ENCODE measurements at regions of chr1 and their contacts with region 1.

Region 1: GRCh38 chr1:71049951-71050598 is 2.5 kb upstream of the PTGER3 start:
- DNase-seq: no peak
- ATAC-seq: peak; percentile 50 to 78 (median 66)
- H3K4me3 ChIP-seq: no peak overlapping the region
- H3K27ac ChIP-seq: no peak overlapping the region
- H3K4me1 ChIP-seq: peaks cover 7% of the 10 kb centered on the region
- H3K27me3 ChIP-seq: peaks cover 0 to 38% (median 11%) of the 10 kb centered on the region in 3 donors
- CTCF ChIP-seq: peak; percentile 74

Region 2: GRCh38 chr1:70382682-70383081 is 667.4 kb before region 1 on chr1:
- intact Hi-C with region 1: no loop called
- DNase-seq: no peak
- ATAC-seq: no peak
- H3K4me3 ChIP-seq: no peak overlapping the region
- H3K27ac ChIP-seq: no peak overlapping the region
- H3K4me1 ChIP-seq: no peaks in the 10 kb centered on the region
- H3K27me3 ChIP-seq: no peaks in the 10 kb centered on the region
- CTCF ChIP-seq: no peak

Region 3: GRCh38 chr1:70410604-70411359 is 639.3 kb before region 1 on chr1 and contains the start of gene CTH:
- intact Hi-C with region 1: loop called in 1 of 2 experiments (anchors 5 kb)
- DNase-seq: peak; percentile 96 to 98
- ATAC-seq: peak; percentile 98 to 100 (median 98)
- H3K4me3 ChIP-seq: peak within 1 kb of the TSS; percentile 88
- H3K27ac ChIP-seq: peak within 1 kb of the TSS; percentile 94
- H3K4me1 ChIP-seq: peaks cover 4% of the 10 kb centered on the region
- H3K27me3 ChIP-seq: no peaks in the 10 kb centered on the region
- CTCF ChIP-seq: no peak
- total RNA-seq, gene CTH: 0.79 to 2.9 (median 1.5) TPM

Region 4: GRCh38 chr1:70436622-70437251 is 613.3 kb before region 1 on chr1:
- intact Hi-C with region 1: loop called in 1 of 2 experiments (anchors 10 kb)
- DNase-seq: no peak
- ATAC-seq: no peak
- H3K4me3 ChIP-seq: no peak overlapping the region
- H3K27ac ChIP-seq: no peak overlapping the region
- H3K4me1 ChIP-seq: no peaks in the 10 kb centered on the region
- H3K27me3 ChIP-seq: no peaks in the 10 kb centered on the region
- CTCF ChIP-seq: peak; percentile 23

Region 5: GRCh38 chr1:70528590-70529333 is 521.3 kb before region 1 on chr1:
- intact Hi-C with region 1: loop called (anchors 2 to 5 kb)
- DNase-seq: no peak
- ATAC-seq: peak in 2 of 4 donors; percentile 62 to 73
- H3K4me3 ChIP-seq: no peak overlapping the region
- H3K27ac ChIP-seq: no peak overlapping the region
- H3K4me1 ChIP-seq: no peaks in the 10 kb centered on the region
- H3K27me3 ChIP-seq: no peaks in the 10 kb centered on the region
- CTCF ChIP-seq: peak; percentile 46

Region 6: DNA sequence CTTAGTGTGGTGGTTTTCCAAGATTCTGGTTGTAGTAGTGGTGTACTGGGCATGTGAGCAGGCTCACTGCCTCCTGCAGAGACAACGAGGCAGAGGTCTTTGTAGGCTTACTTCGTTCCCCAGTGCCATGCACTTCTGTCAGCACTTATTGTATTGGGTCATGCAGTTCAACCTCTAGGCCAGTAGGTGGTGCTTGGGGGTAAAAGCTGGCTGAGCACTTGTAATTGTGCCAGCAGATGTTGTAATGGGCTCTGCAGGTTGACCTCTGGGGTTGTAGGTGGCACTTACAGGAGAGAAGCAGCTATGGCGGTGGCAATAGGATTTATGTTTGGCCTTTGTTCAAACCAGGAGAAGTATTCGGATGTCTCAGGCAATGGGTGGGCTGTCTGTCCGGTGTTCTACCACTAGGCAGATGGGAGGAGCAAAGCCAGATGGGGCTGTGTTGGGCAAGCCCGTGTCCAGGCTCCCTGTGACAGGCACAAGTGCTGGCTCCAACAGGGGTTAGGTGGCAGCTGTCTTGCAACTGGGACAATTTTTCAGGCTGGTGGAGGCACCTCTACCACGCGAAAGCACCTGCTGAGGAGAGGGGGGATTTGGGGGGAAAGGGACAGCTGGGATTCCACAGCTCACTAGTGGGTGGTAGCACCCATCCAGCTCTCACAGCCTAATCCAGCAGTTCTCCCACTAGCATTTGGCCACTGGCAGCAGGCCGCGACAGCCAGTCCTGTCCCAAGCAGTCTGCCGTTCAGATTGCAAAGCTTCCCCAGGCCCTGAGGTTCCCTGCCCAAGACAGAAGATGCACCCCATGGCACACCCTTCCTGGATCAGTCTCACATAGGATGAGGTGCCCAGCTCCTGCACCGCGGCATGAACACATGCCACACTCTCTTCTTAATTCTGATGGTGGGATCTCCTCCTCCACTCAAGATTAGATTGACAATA is 364.5 kb before region 1 on chr1:
- intact Hi-C with region 1: loop called in 1 of 2 experiments (anchors 5 kb)
- DNase-seq: peak; percentile 33 to 53
- ATAC-seq: peak in 3 of 4 donors; percentile 65 to 78 (median 68)
- H3K4me3 ChIP-seq: no peak overlapping the region
- H3K27ac ChIP-seq: no peak overlapping the region
- H3K4me1 ChIP-seq: no peaks in the 10 kb centered on the region
- H3K27me3 ChIP-seq: no peaks in the 10 kb centered on the region
- CTCF ChIP-seq: peak; percentile 61

Region 7: GRCh38 chr1:71031426-71031825 is 18.6 kb before region 1 on chr1:
- intact Hi-C with region 1: loop called in 1 of 2 experiments (anchors 1 kb)
- DNase-seq: no peak
- ATAC-seq: no peak
- H3K4me3 ChIP-seq: no peak overlapping the region
- H3K27ac ChIP-seq: no peak overlapping the region
- H3K4me1 ChIP-seq: no peaks in the 10 kb centered on the region
- H3K27me3 ChIP-seq: peaks cover 0 to 9% (median 0%) of the 10 kb centered on the region in 3 donors
- CTCF ChIP-seq: no peak

Measured in psoas muscle (tissue), 8 donors.